ENCODE measurements at regions of chr17 and their contacts with region 1.

Region 1: GRCh38 chr17:79925242-79925957 is 86.2 kb upstream of the CBX4 start:
- DNase-seq: no peak
- ATAC-seq: peak; percentile 4
- H3K4me3 ChIP-seq: peak overlapping the region in 1 of 3 experiments; percentile 23; a peak in 1 of 6 replicates
- H3K27ac ChIP-seq: peak overlapping the region; percentile 68
- H3K4me1 ChIP-seq: peaks cover 65% of the 10 kb centered on the region
- H3K27me3 ChIP-seq: peaks cover 3 to 4% of the 10 kb centered on the region in 2 experiments; a peak in 3 of 5 replicates
- CTCF ChIP-seq: 0 out of 2 replicates have a peak, but pooled peaks have one; percentile 16
- EP300 ChIP-seq: no peak
- POLR2A ChIP-seq: no peak
- RAD21 ChIP-seq: no peak

Region 2: DNA sequence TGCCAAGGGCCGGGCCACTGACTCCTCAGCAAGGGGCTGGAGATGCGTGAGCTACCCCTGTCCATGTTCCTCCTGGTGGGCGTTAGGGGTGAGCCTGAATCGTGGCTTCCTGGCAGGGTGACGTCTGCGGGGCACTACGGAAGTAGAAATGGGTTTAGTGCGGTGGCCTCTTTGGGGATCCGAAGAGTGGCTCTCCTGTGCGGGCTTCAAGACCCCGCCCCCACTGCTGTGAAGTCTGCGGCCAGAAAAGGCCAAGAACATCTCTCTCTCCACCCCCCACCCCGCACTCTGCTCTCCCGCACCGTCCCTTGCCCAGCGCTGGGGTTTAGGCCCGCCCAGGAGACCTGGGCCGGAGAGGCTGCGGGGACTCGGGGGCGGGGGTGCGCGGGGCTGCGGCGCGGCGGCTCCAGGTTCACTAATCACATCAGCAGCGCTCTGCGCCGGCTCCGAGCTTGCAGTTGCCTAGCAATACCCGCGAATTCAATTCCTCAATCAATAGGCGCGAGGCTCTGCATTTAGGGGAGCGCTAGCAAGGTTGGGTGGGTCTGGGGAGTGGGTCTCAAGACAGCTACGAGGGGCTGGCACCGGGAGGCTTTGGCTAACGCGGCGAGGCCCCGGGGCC is 134.2 kb before region 1 on chr17:
- CTCF ChIA-PET with region 1: no interaction called
- POLR2A ChIA-PET with region 1: no interaction called
- in situ Hi-C with region 1: no loop called
- intact Hi-C with region 1: no loop called
- DNase-seq: no peak
- ATAC-seq: peak; percentile 23
- H3K4me3 ChIP-seq: peak overlapping the region in 2 of 3 experiments; percentile 30 to 54; a peak in 3 of 6 replicates
- H3K27ac ChIP-seq: no peak overlapping the region
- H3K4me1 ChIP-seq: peaks cover 53% of the 10 kb centered on the region
- H3K27me3 ChIP-seq: peaks cover 18 to 48% of the 10 kb centered on the region in 2 experiments
- CTCF ChIP-seq: no peak
- EP300 ChIP-seq: no peak
- POLR2A ChIP-seq: no peak
- RAD21 ChIP-seq: no peak

Region 3: GRCh38 chr17:79844869-79845600 is 80.4 kb before region 1 on chr17:
- CTCF ChIA-PET with region 1: interaction called, 3 read pairs
- POLR2A ChIA-PET with region 1: interaction called, 25 read pairs
- in situ Hi-C with region 1: loop called (anchors 5 kb)
- intact Hi-C with region 1: loop called (anchors 5 kb)
- DNase-seq: peak; percentile 74
- ATAC-seq: peak; percentile 73
- H3K4me3 ChIP-seq: peak overlapping the region; percentile 63 to 87 (median 77)
- H3K27ac ChIP-seq: peak overlapping the region; percentile 85
- H3K4me1 ChIP-seq: peaks cover 86% of the 10 kb centered on the region
- H3K27me3 ChIP-seq: no peaks in the 10 kb centered on the region
- CTCF ChIP-seq: peak; percentile 84
- EP300 ChIP-seq: peak; percentile 24 to 69; a peak in 3 of 4 replicates
- POLR2A ChIP-seq: no peak
- RAD21 ChIP-seq: peak; percentile 51

Region 4: GRCh38 chr17:80364216-80364618 is 438.8 kb after region 1 on chr17:
- CTCF ChIA-PET with region 1: no interaction called
- POLR2A ChIA-PET with region 1: no interaction called
- in situ Hi-C with region 1: no loop called
- intact Hi-C with region 1: no loop called
- DNase-seq: peak; percentile 20
- ATAC-seq: peak; percentile 68
- H3K4me3 ChIP-seq: no peak overlapping the region
- H3K27ac ChIP-seq: no peak overlapping the region
- H3K4me1 ChIP-seq: no peaks in the 10 kb centered on the region
- H3K27me3 ChIP-seq: no peaks in the 10 kb centered on the region
- CTCF ChIP-seq: peak; percentile 83
- EP300 ChIP-seq: no peak
- POLR2A ChIP-seq: no peak
- RAD21 ChIP-seq: peak; percentile 77